Heart left ventricle (tissue), 16 donors: ENCODE measurements at regions of chr16 and their contacts with region 1.

Region 1: GRCh38 chr16:68538880-68539701 is at the start of gene ZFP90:
- DNase-seq: peak; percentile 88 to 95 (median 91)
- ATAC-seq: peak; percentile 96 to 100 (median 100)
- H3K4me3 ChIP-seq: peak within 1 kb of the TSS; percentile 71 to 100 (median 89)
- H3K27ac ChIP-seq: peak within 1 kb of the TSS; percentile 28 to 88 (median 78)
- H3K4me1 ChIP-seq: peaks cover 0 to 13% (median 6%) of the 10 kb centered on the region in 12 donors
- H3K27me3 ChIP-seq: no peaks in the 10 kb centered on the region
- CTCF ChIP-seq: peak in 1 of 12 donors; percentile 19
- POLR2A ChIP-seq: peak in 1 of 2 donors; percentile 71
- total RNA-seq, gene ZFP90: 6.9 to 18.1 (median 12.0) TPM

Region 2: DNA sequence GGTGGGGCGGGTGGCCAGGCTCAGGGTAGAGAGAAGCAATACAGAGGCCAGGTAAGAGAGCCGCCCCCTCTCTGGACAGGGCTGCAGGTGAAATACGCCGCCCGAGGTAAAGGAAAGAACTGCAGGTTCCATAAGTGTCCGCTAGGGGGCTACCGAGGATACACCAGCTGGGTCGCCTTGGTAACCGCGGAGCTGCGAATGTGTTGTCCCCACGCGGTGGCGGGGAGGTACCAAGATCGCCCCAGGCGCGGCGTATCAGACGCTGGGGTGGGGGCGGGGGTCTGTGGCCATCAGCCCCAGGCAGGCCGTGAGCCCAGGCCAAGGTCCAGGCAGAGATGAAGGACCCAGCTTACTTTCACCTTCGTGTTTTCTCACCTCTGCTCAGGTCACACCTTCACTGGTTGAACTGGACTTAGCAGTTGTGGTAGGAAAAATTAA is 18.4 kb before region 1 on chr16:
- intact Hi-C with region 1: no loop called
- DNase-seq: peak; percentile 79 to 91 (median 83)
- ATAC-seq: peak; percentile 55 to 91 (median 88)
- H3K4me3 ChIP-seq: peak overlapping the region in 9 of 12 donors; percentile 24 to 49 (median 29)
- H3K27ac ChIP-seq: no peak overlapping the region
- H3K4me1 ChIP-seq: peaks cover 0 to 9% (median 4%) of the 10 kb centered on the region in 12 donors
- H3K27me3 ChIP-seq: no peaks in the 10 kb centered on the region
- CTCF ChIP-seq: peak; percentile 85 to 99 (median 96)
- POLR2A ChIP-seq: no peak

Region 3: DNA sequence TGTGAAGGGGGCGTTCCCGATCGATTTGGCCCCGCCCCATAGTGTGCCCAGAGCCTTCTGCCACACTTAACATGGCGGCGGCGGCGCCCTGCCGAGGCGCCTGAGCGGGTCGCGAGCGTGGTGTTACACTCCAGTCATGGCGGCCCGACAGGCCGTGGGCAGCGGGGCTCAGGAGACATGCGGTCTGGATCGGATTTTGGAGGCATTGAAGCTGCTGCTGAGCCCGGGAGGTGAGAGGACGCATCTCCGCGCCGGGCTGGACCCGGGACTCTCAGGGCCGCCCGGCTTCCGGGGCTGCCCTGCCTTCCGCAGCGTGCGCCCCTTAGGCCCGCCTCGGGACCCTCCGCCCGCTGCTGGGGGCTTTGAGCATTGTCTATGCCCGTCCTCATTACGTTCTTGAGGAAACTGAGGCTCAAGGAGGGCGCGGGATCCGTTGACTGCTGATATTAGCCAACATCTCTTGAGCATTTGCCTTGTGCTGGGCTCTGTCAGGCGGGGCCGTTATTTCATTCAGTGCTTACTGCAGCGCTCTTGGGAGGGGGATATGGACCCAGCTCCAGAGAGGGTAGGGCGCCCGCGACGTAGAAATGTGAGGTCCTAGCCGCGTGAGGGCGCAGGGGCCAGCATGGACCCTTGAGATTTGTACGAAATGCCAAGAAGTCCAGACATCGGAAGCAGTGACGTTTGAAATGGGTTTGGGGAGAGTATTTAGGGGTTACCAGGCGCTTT is 304.6 kb after region 1 on chr16 and contains the start of gene TANGO6:
- intact Hi-C with region 1: loop called in 2 of 10 experiments (anchors 5 to 10 kb)
- DNase-seq: peak; percentile 84 to 93 (median 89)
- ATAC-seq: peak; percentile 93 to 99 (median 99)
- H3K4me3 ChIP-seq: peak within 1 kb of the TSS; percentile 68 to 99 (median 84)
- H3K27ac ChIP-seq: peak within 1 kb of the TSS; percentile 68 to 93 (median 86)
- H3K4me1 ChIP-seq: peaks cover 0 to 20% (median 7%) of the 10 kb centered on the region in 12 donors
- H3K27me3 ChIP-seq: no peaks in the 10 kb centered on the region
- CTCF ChIP-seq: peak in 2 of 12 donors; percentile 17 to 21
- POLR2A ChIP-seq: peak in 1 of 2 donors; percentile 59
- total RNA-seq, gene TANGO6: 5.5 to 14.1 (median 8.9) TPM

Region 4: DNA sequence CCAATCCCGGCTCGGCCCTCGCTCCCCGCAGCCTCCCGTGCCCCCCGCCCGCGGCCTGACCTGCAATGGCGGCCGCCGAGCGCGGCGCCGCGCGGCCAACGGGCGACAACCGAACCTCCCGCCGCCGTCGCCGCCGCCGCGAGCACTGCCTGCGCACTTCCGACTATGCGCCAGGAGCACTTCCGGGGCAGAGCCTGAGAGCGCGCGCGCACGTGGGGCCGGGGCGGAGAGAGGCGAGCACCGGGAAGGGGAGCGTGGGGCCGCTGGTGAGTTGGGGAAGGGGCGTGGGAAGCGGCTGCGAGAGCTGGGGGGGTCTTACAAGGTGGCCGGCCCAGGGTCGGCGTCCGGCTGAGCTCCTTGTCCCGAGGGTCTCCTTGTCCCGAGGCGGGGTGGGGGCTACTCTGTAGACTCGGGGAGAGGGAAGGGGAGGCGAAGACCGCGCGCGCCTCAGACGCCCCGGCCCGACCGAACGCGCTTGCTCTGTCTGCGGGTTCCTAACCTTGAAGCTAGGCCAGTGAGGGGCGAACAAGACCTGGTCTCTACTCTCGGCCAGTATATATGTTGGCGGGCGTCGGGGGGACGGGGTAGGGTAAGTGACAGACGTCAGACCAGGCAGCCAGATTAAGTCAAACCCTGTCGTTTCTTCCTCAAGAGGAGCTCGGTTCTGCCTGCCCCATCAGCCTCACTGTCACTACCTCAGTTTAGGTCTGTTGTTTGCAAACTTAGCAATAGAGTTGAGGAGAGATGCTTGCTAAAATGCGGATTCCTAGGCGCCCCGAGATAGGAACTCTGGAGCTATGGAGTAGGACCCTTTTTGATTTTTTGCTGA is 593.5 kb after region 1 on chr16 and contains the starts of genes CHTF8 and UTP4:
- intact Hi-C with region 1: loop called in 2 of 10 experiments (anchors 10 kb)
- DNase-seq: peak; percentile 88 to 94 (median 90)
- ATAC-seq: peak; percentile 90 to 96 (median 94)
- H3K4me3 ChIP-seq: peak within 1 kb of the TSS; percentile 77 to 99 (median 89)
- H3K27ac ChIP-seq: peak within 1 kb of the TSS; percentile 87 to 96 (median 92)
- H3K4me1 ChIP-seq: peaks cover 0 to 36% (median 19%) of the 10 kb centered on the region in 12 donors
- H3K27me3 ChIP-seq: no peaks in the 10 kb centered on the region
- CTCF ChIP-seq: no peak
- POLR2A ChIP-seq: peak; percentile 62 to 76
- total RNA-seq, gene CHTF8: 31.5 to 79.7 (median 57.2) TPM
- total RNA-seq, gene UTP4: 12.8 to 38.2 (median 28.3) TPM

Region 5: DNA sequence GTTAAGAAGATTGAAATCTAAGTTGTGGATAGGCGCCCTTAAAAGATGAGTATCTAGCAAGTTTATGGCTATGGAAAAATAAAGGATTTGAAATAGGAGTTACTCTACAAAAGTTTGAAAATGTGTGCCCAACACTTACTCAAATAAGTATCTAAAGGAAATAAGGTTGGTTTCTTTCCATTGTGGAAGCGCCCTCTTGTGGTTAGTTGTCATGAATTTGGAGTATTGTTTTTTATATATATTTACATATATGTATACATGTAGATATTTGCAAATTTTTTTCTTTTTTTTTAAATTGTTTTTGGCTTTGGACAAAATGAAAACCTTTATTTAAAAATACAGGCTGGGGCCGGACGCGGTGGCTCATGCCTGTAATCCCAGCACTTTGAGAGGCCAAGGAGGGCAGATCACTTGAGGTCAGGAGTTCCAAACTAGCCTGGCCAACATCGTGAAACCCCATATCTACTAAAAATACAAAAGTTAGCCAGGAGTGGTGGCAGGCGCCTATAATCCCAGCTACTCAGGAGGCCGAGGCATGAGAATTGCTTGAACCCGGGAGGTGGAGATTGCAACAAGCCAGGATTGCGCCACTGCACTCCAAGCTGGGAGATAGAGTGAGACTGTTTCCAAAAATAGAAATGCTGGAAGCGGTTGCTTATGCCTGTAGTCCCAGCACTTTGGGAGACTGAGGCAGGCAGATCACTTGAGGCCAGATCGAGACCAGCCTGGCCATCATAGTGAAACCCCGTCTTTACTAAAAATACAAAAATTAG is 748.0 kb after region 1 on chr16:
- intact Hi-C with region 1: loop called in 1 of 10 experiments (anchors 10 kb)
- DNase-seq: peak in 3 of 5 donors; percentile 22 to 69 (median 53)
- ATAC-seq: peak; percentile 54 to 87 (median 81)
- H3K4me3 ChIP-seq: no peak overlapping the region
- H3K27ac ChIP-seq: no peak overlapping the region
- H3K4me1 ChIP-seq: peaks cover 0 to 14% (median 6%) of the 10 kb centered on the region in 12 donors
- H3K27me3 ChIP-seq: no peaks in the 10 kb centered on the region
- CTCF ChIP-seq: peak; percentile 57 to 83 (median 72)
- POLR2A ChIP-seq: no peak